MCF 10A (cell line): ENCODE measurements at regions of chr11 and their contacts with region 1.

Region 1: GRCh38 chr11:57456960-57457642 is 3.2 kb upstream of the RTN4RL2 start:
- DNase-seq: peak; percentile 82
- H3K4me3 Mint-ChIP-seq: peak overlapping the region; percentile 39
- H3K27ac Mint-ChIP-seq: no peak overlapping the region
- H3K4me1 Mint-ChIP-seq: peaks cover 27% of the 10 kb centered on the region
- H3K27me3 Mint-ChIP-seq: peaks cover 34% of the 10 kb centered on the region
- CTCF ChIP-seq: peak; percentile 98

Region 2: GRCh38 chr11:57434640-57435546 is 22.2 kb before region 1 on chr11:
- CTCF ChIA-PET with region 1: interaction called, 40 read pairs
- POLR2A ChIA-PET with region 1: interaction called, 3 read pairs
- intact Hi-C with region 1: no loop called
- DNase-seq: peak; percentile 96
- H3K4me3 Mint-ChIP-seq: peak overlapping the region; percentile 41
- H3K27ac Mint-ChIP-seq: peak overlapping the region; percentile 85
- H3K4me1 Mint-ChIP-seq: peaks cover 17% of the 10 kb centered on the region
- H3K27me3 Mint-ChIP-seq: no peaks in the 10 kb centered on the region
- CTCF ChIP-seq: no peak

Region 3: DNA sequence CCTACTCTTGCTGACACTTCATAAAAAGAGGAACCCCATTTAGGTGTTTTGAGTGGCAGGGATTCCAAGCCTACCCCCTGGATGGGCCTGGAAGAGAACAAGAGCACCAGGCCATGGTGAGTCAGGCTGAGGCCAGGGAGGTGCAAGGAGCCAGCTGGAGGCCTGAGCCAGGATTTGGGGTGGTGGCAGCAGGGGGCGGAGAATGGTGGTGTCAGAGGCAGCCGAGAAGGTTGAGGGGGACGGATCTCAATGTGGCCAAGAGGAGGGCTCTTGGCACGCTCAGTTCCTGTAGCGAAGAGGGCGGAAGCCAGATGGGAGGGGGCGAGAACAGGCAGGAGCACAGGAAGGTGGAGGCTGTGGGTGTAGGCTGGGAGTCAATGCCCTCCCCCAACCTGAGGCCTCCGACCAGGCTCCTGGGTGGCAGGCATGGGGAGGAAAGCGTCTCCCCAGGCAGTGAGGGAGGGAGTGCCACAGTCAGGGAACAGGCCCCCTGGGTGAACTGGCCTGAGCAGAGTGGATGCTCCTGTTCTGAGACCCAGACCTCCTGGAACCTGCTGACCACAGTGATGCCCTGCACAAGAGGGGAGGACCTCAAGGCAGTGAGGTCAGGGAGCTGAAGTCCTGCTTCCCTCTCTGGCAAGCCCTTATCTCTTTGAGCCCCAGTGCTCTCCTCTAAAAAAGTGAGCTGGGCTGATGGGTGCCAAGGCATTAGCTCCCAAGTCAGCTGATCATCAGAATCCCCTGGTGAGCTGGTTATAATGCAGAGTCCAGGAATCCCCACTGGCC is 17.1 kb after region 1 on chr11:
- CTCF ChIA-PET with region 1: interaction called, 50 read pairs
- POLR2A ChIA-PET with region 1: interaction called, 3 read pairs
- intact Hi-C with region 1: no loop called
- DNase-seq: no peak
- H3K4me3 Mint-ChIP-seq: no peak overlapping the region
- H3K27ac Mint-ChIP-seq: no peak overlapping the region
- H3K4me1 Mint-ChIP-seq: no peaks in the 10 kb centered on the region
- H3K27me3 Mint-ChIP-seq: no peaks in the 10 kb centered on the region
- CTCF ChIP-seq: no peak

Region 4: GRCh38 chr11:57499413-57499982 is 42.4 kb after region 1 on chr11:
- CTCF ChIA-PET with region 1: interaction called, 46 read pairs
- POLR2A ChIA-PET with region 1: no interaction called
- intact Hi-C with region 1: no loop called
- DNase-seq: peak; percentile 91
- H3K4me3 Mint-ChIP-seq: peak overlapping the region; percentile 35
- H3K27ac Mint-ChIP-seq: peak overlapping the region; percentile 35
- H3K4me1 Mint-ChIP-seq: peaks cover 8% of the 10 kb centered on the region
- H3K27me3 Mint-ChIP-seq: no peaks in the 10 kb centered on the region
- CTCF ChIP-seq: no peak

Region 5: DNA sequence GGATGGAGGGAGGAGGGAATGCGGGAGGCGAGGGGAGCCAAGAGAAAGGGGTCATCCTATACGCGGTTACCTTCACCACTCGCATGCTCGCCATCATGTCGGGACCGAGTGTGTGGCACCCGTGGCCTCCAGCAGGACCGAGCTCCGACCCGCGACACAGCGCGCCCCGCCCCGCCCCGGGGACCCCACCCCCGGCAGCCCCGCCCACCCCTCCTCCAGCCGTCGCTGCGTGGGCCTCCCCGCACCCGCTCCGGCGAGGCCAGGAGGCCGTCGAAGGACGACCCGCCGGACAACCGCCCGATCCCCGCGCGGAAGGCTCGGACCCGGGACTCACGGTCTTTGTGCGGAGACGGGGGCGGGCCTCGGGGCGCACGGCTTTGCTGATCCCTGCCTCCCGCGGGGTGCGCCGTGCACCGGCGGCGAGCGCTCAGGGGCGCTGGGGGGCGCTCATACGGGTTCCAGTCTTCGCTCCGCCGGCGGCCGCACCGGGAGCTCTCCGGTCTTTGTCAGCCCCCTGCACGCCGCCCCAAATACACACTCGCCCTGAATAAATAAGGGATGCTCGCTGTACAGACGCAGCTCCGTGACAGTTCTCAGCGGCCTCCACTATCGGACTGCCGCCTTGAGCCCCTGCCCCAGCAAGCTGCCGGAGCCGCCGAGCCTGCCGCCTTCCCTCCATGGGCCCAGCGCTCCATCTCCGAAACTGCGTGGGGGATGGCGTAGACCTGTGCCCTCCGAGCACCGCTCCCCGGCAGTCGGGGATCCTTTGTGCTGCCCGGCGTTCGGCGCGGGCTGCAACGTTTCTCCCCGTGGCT is 110.6 kb after region 1 on chr11 and contains the start of gene UBE2L6:
- CTCF ChIA-PET with region 1: interaction called, 8 read pairs
- POLR2A ChIA-PET with region 1: no interaction called
- intact Hi-C with region 1: loop called (anchors 2 kb)
- DNase-seq: peak; percentile 34
- H3K4me3 Mint-ChIP-seq: peak within 1 kb of the TSS; percentile 94
- H3K27ac Mint-ChIP-seq: peak within 1 kb of the TSS; percentile 63
- H3K4me1 Mint-ChIP-seq: peaks cover 34% of the 10 kb centered on the region
- H3K27me3 Mint-ChIP-seq: no peaks in the 10 kb centered on the region
- CTCF ChIP-seq: no peak
- total RNA-seq, gene UBE2L6: 17.0 and 17.3 TPM in 2 replicates